Breast epithelium (tissue), 4 donors: ENCODE measurements at regions of chr17 and their contacts with region 1.

Region 1: GRCh38 chr17:39057701-39058206 is 90.6 kb upstream of the FBXO47 start:
- DNase-seq: no peak
- H3K4me3 ChIP-seq: peak overlapping the region; percentile 46 to 71 (median 61)
- H3K27ac ChIP-seq: peak overlapping the region; percentile 55 to 77
- H3K4me1 ChIP-seq: peaks cover 1 to 3% of the 10 kb centered on the region in 2 donors
- H3K27me3 ChIP-seq: no peaks in the 10 kb centered on the region
- CTCF ChIP-seq: no peak
- POLR2A ChIP-seq: no peak

Region 2: GRCh38 chr17:38943607-38944006 is 114.1 kb before region 1 on chr17:
- intact Hi-C with region 1: no loop called
- DNase-seq: no peak
- H3K4me3 ChIP-seq: no peak overlapping the region
- H3K27ac ChIP-seq: no peak overlapping the region
- H3K4me1 ChIP-seq: no peaks in the 10 kb centered on the region
- H3K27me3 ChIP-seq: no peaks in the 10 kb centered on the region
- CTCF ChIP-seq: no peak
- POLR2A ChIP-seq: no peak

Region 3: DNA sequence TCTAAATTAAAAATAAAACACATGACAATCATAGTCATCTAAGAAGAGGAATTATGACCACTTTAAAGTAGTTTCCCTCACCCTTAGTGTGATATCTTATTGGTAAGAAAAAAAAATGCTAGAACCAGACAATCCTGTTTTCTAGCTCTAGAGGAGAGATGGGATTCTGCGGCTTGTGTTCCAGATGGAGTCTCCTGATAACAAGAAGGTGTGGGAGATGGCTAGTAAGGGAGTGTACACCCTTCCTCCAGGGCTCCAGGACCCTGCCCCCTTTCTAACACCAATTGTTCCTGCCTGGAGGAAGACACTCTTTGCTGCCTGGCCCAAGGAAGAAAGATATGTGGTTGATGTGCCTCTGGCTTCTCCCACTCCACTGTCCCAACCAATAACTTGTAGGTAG is 21.7 kb before region 1 on chr17:
- intact Hi-C with region 1: loop called (anchors 1 kb)
- DNase-seq: no peak
- H3K4me3 ChIP-seq: no peak overlapping the region
- H3K27ac ChIP-seq: no peak overlapping the region
- H3K4me1 ChIP-seq: no peaks in the 10 kb centered on the region
- H3K27me3 ChIP-seq: no peaks in the 10 kb centered on the region
- CTCF ChIP-seq: no peak
- POLR2A ChIP-seq: no peak